Calu3 (cell line): ENCODE measurements at regions of chr20 and their contacts with region 1.

Region 1: GRCh38 chr20:58179432-58180099 is 48.9 kb downstream of the ANKRD60 start:
- DNase-seq: peak; percentile 92
- H3K4me3 Mint-ChIP-seq: peak overlapping the region; percentile 68
- H3K27ac Mint-ChIP-seq: peak overlapping the region; percentile 91
- H3K4me1 Mint-ChIP-seq: peaks cover 35% of the 10 kb centered on the region
- H3K27me3 Mint-ChIP-seq: no peaks in the 10 kb centered on the region
- CTCF ChIP-seq: peak; percentile 100

Region 2: DNA sequence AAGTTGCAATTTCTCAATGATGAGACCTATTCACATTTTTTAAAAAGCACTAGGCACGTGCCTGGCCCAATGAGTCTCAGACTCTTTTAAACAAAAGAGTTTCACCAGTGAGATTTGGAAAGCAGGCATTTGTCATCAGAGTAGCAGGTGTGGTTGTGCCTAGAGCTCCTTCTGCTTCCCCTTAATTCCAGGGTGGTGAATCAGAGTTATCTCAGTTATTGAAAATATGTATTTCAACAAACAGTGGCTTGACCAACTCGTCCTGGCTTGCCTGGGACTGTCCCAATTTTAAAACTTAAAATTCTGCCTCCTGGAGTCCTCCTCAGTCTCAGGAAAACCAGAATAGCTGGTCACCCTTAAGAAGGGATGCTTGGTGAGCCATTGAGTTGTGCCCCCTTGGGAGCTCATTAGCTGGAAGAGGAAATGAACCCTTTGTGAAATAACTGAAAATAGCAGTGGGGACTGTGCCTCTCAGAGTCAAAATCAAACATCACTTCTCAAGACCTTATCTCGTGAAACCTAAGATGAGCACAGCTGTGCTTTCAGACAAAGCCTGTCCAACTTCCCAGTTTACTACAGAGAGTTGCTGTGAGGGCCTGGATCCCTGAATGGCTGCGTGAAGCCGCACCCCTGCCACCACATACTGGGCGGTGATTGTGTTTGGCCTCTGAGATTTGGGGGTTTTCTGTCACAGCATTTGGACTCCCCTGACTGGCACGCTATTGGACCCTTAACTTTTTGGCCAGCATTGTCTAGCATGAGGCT is 67.4 kb before region 1 on chr20:
- CTCF ChIA-PET with region 1: no interaction called
- intact Hi-C with region 1: loop called (anchors 2 kb)
- DNase-seq: peak; percentile 66
- H3K4me3 Mint-ChIP-seq: no peak overlapping the region
- H3K27ac Mint-ChIP-seq: peak overlapping the region; percentile 29
- H3K4me1 Mint-ChIP-seq: peaks cover 57% of the 10 kb centered on the region
- H3K27me3 Mint-ChIP-seq: no peaks in the 10 kb centered on the region
- CTCF ChIP-seq: no peak